ENCODE measurements at regions of chr10 and their contacts with region 1.

Region 1: DNA sequence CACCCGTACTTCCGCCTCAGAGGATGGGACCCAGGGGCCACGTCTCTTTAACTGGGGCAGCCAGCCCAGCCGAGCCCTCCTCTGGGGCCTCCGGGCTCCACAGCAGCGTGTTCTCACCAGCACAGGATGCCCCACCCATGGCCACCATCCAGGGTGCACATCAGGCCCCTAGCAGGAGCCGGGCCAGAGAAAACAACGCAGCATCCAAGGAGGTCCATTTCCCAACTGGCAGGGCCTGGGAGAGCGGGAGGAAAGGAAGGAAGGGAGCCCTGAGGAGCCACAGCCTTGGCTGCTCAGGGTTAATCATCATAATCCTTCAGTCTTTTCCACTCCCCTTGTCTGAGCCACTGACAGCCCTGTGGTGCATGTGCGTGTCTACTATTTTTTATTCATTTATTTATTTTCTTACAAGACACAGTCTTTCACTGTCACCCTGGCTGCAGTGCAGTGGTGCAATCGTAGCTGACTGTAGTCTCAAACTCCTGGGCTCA is 3.6 kb downstream of the PLAC9 start:
- DNase-seq: peak in 1 of 2 donors; percentile 92
- H3K4me3 ChIP-seq: no peak overlapping the region
- H3K27ac ChIP-seq: peak overlapping the region; percentile 85
- H3K4me1 ChIP-seq: peaks cover 44% of the 10 kb centered on the region
- H3K27me3 ChIP-seq: no peaks in the 10 kb centered on the region
- CTCF ChIP-seq: no peak
- POLR2A ChIP-seq: no peak

Region 2: GRCh38 chr10:80064120-80064886 is 71.8 kb before region 1 on chr10:
- intact Hi-C with region 1: loop called (anchors 10 kb)
- DNase-seq: no peak
- H3K4me3 ChIP-seq: no peak overlapping the region
- H3K27ac ChIP-seq: no peak overlapping the region
- H3K4me1 ChIP-seq: no peaks in the 10 kb centered on the region
- H3K27me3 ChIP-seq: no peaks in the 10 kb centered on the region
- CTCF ChIP-seq: no peak
- POLR2A ChIP-seq: no peak

Region 3: DNA sequence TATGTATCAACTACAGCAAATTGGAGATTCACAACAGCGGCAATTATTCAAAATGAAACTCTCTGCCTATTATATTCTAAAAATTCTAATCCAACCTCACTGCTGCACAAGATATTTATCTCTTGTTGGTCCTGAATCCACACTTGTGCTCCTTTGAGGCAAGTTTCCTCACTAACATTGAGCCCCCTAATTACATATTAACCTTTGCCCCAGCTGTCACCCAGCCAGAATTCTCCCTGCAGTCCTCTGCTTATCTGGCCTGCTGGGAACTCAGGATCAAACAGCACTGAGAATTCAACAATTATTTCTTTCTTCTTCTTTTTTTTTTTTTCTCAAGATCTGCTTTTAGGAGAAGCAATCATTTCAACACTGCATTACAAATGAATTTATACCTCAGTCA is 25.1 kb before region 1 on chr10:
- intact Hi-C with region 1: no loop called
- DNase-seq: no peak
- H3K4me3 ChIP-seq: no peak overlapping the region
- H3K27ac ChIP-seq: peak overlapping the region; percentile 42
- H3K4me1 ChIP-seq: no peaks in the 10 kb centered on the region
- H3K27me3 ChIP-seq: no peaks in the 10 kb centered on the region
- CTCF ChIP-seq: no peak
- POLR2A ChIP-seq: no peak

Region 4: DNA sequence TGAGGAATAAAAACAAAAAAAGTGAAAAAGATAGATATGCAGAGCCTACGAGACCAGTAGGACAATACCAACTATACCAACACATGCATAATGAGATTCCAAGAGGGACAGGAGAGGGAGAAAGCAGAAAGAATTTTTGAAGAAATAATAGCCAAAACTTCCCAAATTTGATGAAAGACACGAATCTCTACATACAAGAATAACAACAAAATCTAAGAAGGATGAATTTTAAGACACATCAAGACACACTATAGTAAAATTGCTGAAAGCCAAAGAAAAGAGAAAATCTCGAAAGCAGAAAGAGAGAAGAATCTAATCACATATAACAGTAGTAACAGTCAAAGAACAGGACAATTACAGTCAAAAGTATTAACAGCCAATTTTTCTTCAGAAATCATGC is 160.8 kb after region 1 on chr10:
- intact Hi-C with region 1: no loop called
- DNase-seq: no peak
- H3K4me3 ChIP-seq: no peak overlapping the region
- H3K27ac ChIP-seq: no peak overlapping the region
- H3K4me1 ChIP-seq: no peaks in the 10 kb centered on the region
- H3K27me3 ChIP-seq: no peaks in the 10 kb centered on the region
- CTCF ChIP-seq: no peak
- POLR2A ChIP-seq: no peak

Region 5: GRCh38 chr10:81040940-81041339 is 904.8 kb after region 1 on chr10:
- intact Hi-C with region 1: no loop called
- DNase-seq: no peak
- H3K4me3 ChIP-seq: no peak overlapping the region
- H3K27ac ChIP-seq: no peak overlapping the region
- H3K4me1 ChIP-seq: no peaks in the 10 kb centered on the region
- H3K27me3 ChIP-seq: no peaks in the 10 kb centered on the region
- CTCF ChIP-seq: no peak
- POLR2A ChIP-seq: no peak

Measured in vagina (tissue), 2 donors.